Mammary epithelial cell (primary cell): ENCODE measurements at regions of chr5 and their contacts with region 1.

Region 1: DNA sequence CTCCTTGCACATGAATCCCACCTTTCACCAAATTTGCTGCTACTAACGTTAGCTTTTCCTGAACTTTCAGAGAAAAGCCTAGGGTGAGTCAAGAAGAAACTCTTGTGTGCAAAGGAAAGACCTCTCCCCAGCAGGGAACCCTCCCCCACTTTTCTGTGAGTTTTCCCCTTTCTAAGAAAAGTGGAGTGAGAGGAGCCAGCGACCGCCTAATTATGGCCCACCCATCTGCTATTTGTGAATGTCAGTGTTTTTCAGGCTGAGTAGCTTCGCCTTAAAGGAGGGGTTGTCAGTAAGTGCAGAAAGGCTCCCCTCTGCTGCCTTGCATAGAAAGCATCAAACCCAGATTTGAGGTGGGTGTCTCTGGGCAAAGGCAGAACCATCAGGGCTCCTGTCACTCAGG is 46.8 kb upstream of the SPOCK1 start:
- DNase-seq: no peak
- H3K4me3 ChIP-seq: no peak overlapping the region
- H3K27ac ChIP-seq: no peak overlapping the region
- H3K4me1 ChIP-seq: no peaks in the 10 kb centered on the region
- H3K27me3 ChIP-seq: no peaks in the 10 kb centered on the region
- CTCF ChIP-seq: no peak

Region 2: GRCh38 chr5:137264573-137264972 is 281.4 kb before region 1 on chr5:
- CTCF ChIA-PET with region 1: no interaction called
- dilution Hi-C with region 1: no loop called
- in situ Hi-C with region 1: no loop called
- intact Hi-C with region 1: no loop called
- DNase-seq: no peak
- H3K4me3 ChIP-seq: no peak overlapping the region
- H3K27ac ChIP-seq: no peak overlapping the region
- H3K4me1 ChIP-seq: no peaks in the 10 kb centered on the region
- H3K27me3 ChIP-seq: peaks cover 4% of the 10 kb centered on the region
- CTCF ChIP-seq: no peak

Region 3: GRCh38 chr5:137491121-137491520 is 54.8 kb before region 1 on chr5:
- CTCF ChIA-PET with region 1: no interaction called
- dilution Hi-C with region 1: loop called (anchors 5 kb)
- in situ Hi-C with region 1: no loop called
- intact Hi-C with region 1: no loop called
- DNase-seq: peak; percentile 33
- H3K4me3 ChIP-seq: no peak overlapping the region
- H3K27ac ChIP-seq: no peak overlapping the region
- H3K4me1 ChIP-seq: peaks cover 8% of the 10 kb centered on the region
- H3K27me3 ChIP-seq: no peaks in the 10 kb centered on the region
- CTCF ChIP-seq: no peak

Region 4: DNA sequence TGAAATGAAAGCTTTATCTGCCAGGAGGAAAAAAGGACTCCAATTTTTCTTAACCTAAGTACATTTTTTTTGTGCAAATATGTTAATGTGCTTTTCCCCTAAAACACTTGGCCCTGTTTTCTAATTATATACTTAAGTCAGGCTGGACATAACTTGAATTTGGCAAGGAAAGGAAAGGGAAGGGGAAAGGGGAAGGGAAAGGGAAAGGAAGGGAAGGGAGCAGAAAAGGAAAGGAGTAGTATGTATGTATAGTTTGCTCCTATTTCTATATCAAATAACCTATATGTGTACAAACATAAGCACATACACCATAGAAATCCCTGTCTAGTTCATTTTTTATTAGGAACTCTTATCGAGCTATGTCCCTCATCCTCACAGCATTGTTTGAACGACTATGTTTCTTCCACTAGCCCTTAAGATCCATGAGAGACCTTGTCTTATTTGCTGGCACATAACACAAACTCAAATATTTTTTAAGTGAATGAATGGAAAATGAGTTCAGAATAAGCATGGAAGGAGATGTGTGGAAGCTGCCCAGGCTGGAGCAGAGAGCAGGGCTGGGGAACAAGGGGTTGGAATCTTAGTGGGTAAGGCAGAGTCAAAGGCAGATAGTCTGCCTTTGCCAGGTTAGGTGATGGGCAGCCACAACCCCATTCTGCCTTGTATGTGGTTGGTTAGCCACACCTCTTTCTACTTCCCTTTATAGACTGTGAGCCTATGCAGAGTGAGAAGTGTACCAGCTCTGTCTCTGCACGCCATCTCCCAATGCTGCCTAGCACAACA is 119.9 kb after region 1 on chr5:
- CTCF ChIA-PET with region 1: no interaction called
- dilution Hi-C with region 1: no loop called
- in situ Hi-C with region 1: no loop called
- intact Hi-C with region 1: no loop called
- DNase-seq: no peak
- H3K4me3 ChIP-seq: no peak overlapping the region
- H3K27ac ChIP-seq: no peak overlapping the region
- H3K4me1 ChIP-seq: peaks cover 4% of the 10 kb centered on the region
- H3K27me3 ChIP-seq: no peaks in the 10 kb centered on the region
- CTCF ChIP-seq: no peak